Heart right ventricle (tissue), 16 donors: ENCODE measurements at regions of chr7 and their contacts with region 1.

Region 1: GRCh38 chr7:155983176-155983815 is 171.0 kb upstream of the SHH start:
- DNase-seq: no peak
- ATAC-seq: no peak
- H3K4me3 ChIP-seq: no peak overlapping the region
- H3K27ac ChIP-seq: no peak overlapping the region
- H3K4me1 ChIP-seq: no peaks in the 10 kb centered on the region
- H3K27me3 ChIP-seq: peaks cover 0 to 32% (median 27%) of the 10 kb centered on the region in 7 donors
- CTCF ChIP-seq: no peak

Region 2: GRCh38 chr7:156039971-156040677 is 56.8 kb after region 1 on chr7:
- intact Hi-C with region 1: loop called in 2 of 10 experiments (anchors 5 to 10 kb)
- DNase-seq: no peak
- ATAC-seq: no peak
- H3K4me3 ChIP-seq: no peak overlapping the region
- H3K27ac ChIP-seq: no peak overlapping the region
- H3K4me1 ChIP-seq: no peaks in the 10 kb centered on the region
- H3K27me3 ChIP-seq: peaks cover 0 to 58% (median 29%) of the 10 kb centered on the region in 7 donors
- CTCF ChIP-seq: no peak

Region 3: GRCh38 chr7:156082048-156083040 is 99.0 kb after region 1 on chr7:
- intact Hi-C with region 1: no loop called
- DNase-seq: no peak
- ATAC-seq: no peak
- H3K4me3 ChIP-seq: no peak overlapping the region
- H3K27ac ChIP-seq: no peak overlapping the region
- H3K4me1 ChIP-seq: no peaks in the 10 kb centered on the region
- H3K27me3 ChIP-seq: peaks cover 0 to 24% (median 8%) of the 10 kb centered on the region in 7 donors
- CTCF ChIP-seq: no peak

Region 4: DNA sequence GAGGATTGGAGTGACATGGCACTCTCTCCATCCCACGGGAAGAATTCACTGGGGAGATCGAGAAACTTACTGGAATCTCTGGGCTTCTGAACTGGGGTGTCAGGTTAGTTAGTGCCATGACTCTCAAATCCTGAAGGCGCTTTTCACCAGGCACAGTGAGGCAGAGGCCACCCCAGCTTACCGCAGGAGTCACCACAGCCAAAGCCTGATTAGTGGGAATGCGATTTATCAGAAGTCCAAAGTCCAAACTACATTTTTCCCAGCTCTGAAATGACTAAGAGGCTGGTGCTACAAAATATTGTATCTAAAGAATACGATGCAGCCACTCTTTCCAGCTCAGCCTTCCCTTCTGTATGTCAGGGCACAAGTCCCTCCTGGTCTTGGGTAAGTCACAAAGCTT is 163.8 kb after region 1 on chr7:
- intact Hi-C with region 1: loop called in 1 of 10 experiments (anchors 10 kb)
- DNase-seq: no peak
- ATAC-seq: no peak
- H3K4me3 ChIP-seq: no peak overlapping the region
- H3K27ac ChIP-seq: no peak overlapping the region
- H3K4me1 ChIP-seq: no peaks in the 10 kb centered on the region
- H3K27me3 ChIP-seq: peaks cover 0 to 59% (median 16%) of the 10 kb centered on the region in 7 donors
- CTCF ChIP-seq: no peak